ENCODE measurements at regions of chr10 and their contacts with region 1.

Region 1: GRCh38 chr10:24118246-24118645 is 90.7 kb upstream of the KIAA1217 start:
- DNase-seq: no peak
- ATAC-seq: peak; percentile 57

Region 2: DNA sequence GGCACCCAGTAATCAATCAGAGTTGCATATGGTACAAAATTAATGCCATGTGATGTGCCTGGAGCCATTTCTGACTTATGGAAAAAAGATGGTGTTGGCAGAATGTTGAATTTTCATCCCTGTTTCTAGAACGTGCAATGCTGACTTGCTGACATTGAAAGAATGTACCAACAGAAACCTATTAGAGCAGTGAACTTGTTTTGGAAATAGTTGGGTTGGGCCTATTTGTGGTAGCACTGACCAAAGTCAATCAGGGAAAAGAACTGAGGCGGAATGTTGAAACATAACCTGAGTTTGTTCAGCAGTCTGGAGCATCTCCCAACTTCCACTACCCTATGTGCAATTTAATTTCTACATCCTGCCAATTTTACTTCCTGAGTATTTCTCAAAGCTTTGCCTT is 79.0 kb after region 1 on chr10:
- intact Hi-C with region 1: loop called (anchors 10 kb)
- DNase-seq: no peak
- ATAC-seq: no peak

Measured in left ventricle myocardium superior (tissue), 1 donor.